Activated naive CD4-positive, alpha-beta T cell treated with anti-CD3 and anti-CD28 coated beads, Interleukin-2, amount 10 ng/mL, durations not matched to agents 7 days and 5 days (primary cell): ENCODE measurements at regions of chr4 and their contacts with region 1.

Region 1: DNA sequence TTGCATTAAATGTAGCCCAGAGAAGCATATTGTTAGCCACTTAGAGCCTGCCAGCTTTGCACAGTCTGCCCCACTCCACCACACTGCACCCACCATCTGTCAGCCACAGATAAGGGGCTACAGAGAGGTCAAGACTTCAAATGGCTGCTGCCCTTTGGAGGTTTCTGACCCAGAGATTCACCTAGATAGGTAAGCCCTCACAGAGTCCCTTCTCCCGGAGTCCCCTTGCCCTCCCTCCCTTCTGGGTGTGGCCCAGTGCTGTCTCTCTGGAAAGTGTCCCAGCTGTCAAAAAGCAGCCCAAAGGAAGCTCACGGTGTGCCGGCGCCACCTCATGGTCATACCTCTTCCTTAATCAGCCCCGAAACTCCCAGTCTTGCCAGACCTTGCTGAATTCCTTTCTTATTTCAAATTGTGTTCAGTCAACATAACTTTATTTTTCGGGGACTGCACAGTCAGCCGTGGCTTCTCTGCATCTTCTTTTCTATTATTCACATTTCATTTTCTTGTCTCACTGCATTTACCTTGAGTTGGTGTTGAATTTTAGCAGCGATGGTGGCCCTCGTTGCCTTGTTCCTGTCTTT is 14.1 kb upstream of the GRPEL1 start:
- DNase-seq: peak; percentile 70
- H3K4me3 Mint-ChIP-seq: no peak overlapping the region
- H3K27ac Mint-ChIP-seq: peak overlapping the region; percentile 56
- H3K4me1 Mint-ChIP-seq: peaks cover 5% of the 10 kb centered on the region
- H3K27me3 Mint-ChIP-seq: peaks cover 59% of the 10 kb centered on the region

Region 2: GRCh38 chr4:6716018-6716911 is 365.7 kb before region 1 on chr4 and contains the start of gene BLOC1S4:
- CTCF ChIA-PET with region 1: interaction called, 20 read pairs
- DNase-seq: peak; percentile 89
- H3K4me3 Mint-ChIP-seq: peak within 1 kb of the TSS; percentile 89
- H3K27ac Mint-ChIP-seq: peak within 1 kb of the TSS; percentile 96
- H3K4me1 Mint-ChIP-seq: peaks cover 34% of the 10 kb centered on the region
- H3K27me3 Mint-ChIP-seq: peaks cover 15% of the 10 kb centered on the region

Region 3: DNA sequence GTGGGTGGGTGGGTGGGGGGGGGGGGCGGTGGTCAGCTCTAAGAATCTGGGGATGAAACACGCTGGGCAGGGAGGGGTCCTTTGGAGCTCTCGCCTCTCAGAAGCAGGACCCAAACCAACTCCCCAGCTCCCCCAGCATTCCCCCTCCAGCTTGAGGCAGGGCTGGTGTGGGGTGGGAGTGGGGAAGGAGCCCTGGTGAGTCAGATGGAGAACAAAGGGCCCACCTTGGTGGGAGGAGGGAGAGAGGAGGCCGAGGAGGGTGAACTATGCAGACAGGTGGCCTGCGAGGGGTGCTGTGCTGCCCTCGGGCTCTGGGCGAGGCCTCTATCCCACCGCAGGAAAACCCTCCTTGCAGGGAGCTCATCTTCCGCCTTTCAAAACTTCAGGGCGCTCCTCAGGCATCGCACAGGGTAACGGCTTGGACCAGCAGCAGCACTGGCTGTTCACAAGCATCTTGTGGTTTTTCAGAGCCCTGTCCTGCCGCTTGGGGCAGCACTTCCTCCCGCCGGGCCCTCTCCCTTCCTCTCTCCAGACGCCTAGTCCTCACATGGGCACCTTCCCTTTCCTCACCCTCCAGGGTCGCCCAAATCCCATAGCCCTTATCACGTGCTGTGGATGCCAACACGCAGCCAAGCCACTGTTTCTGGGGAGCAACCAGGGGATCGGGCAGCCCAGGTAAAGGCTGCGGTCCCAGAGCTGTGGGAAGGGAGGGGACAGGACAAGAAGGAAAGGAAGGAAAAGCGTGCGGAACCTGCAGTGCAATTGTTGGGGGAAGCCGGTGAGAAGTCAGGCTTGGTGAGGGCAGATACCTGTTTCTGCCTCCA is 19.9 kb after region 1 on chr4:
- CTCF ChIA-PET with region 1: interaction called, 10 read pairs
- DNase-seq: peak; percentile 71
- H3K4me3 Mint-ChIP-seq: peak overlapping the region; percentile 77
- H3K27ac Mint-ChIP-seq: peak overlapping the region; percentile 76
- H3K4me1 Mint-ChIP-seq: peaks cover 22% of the 10 kb centered on the region
- H3K27me3 Mint-ChIP-seq: peaks cover 49% of the 10 kb centered on the region